ENCODE measurements at regions of chr19 and their contacts with region 1.

Region 1: GRCh38 chr19:12789904-12790619 is 1.2 kb upstream of the JUNB start:
- DNase-seq: peak; percentile 75 to 97 (median 86)
- ATAC-seq: peak; percentile 25
- H3K4me3 ChIP-seq: peak overlapping the region; percentile 98
- H3K4me3 Mint-ChIP-seq: peak overlapping the region; percentile 97
- H3K27ac ChIP-seq: peak overlapping the region; percentile 99 to 100
- H3K27ac Mint-ChIP-seq: peak overlapping the region; percentile 99
- H3K4me1 ChIP-seq: peaks cover 66% of the 10 kb centered on the region
- H3K4me1 Mint-ChIP-seq: peaks cover 42% of the 10 kb centered on the region
- H3K27me3 ChIP-seq: no peaks in the 10 kb centered on the region
- H3K27me3 Mint-ChIP-seq: peaks cover 13% of the 10 kb centered on the region
- CTCF ChIP-seq: no peak

Region 2: GRCh38 chr19:12722566-12723380 is 67.3 kb before region 1 on chr19:
- CTCF ChIA-PET with region 1: no interaction called
- POLR2A ChIA-PET with region 1: interaction called, 39 read pairs
- intact Hi-C with region 1: no loop called
- DNase-seq: peak; percentile 80 to 99 (median 90)
- ATAC-seq: peak; percentile 87
- H3K4me3 ChIP-seq: peak overlapping the region; percentile 69
- H3K4me3 Mint-ChIP-seq: peak overlapping the region; percentile 98
- H3K27ac ChIP-seq: peak overlapping the region; percentile 48 to 78
- H3K27ac Mint-ChIP-seq: peak overlapping the region; percentile 89
- H3K4me1 ChIP-seq: peaks cover 39% of the 10 kb centered on the region
- H3K4me1 Mint-ChIP-seq: peaks cover 47% of the 10 kb centered on the region
- H3K27me3 ChIP-seq: no peaks in the 10 kb centered on the region
- H3K27me3 Mint-ChIP-seq: no peaks in the 10 kb centered on the region
- CTCF ChIP-seq: no peak

Region 3: GRCh38 chr19:12766051-12766521 is 24.0 kb before region 1 on chr19:
- CTCF ChIA-PET with region 1: interaction called, 30 read pairs
- POLR2A ChIA-PET with region 1: interaction called, 23 read pairs
- intact Hi-C with region 1: no loop called
- DNase-seq: peak in 10 of 14 experiments; percentile 66 to 91 (median 80)
- ATAC-seq: peak; percentile 77
- H3K4me3 ChIP-seq: no peak overlapping the region
- H3K4me3 Mint-ChIP-seq: no peak overlapping the region
- H3K27ac ChIP-seq: no peak overlapping the region
- H3K27ac Mint-ChIP-seq: no peak overlapping the region
- H3K4me1 ChIP-seq: peaks cover 22% of the 10 kb centered on the region
- H3K4me1 Mint-ChIP-seq: peaks cover 7% of the 10 kb centered on the region
- H3K27me3 ChIP-seq: no peaks in the 10 kb centered on the region
- H3K27me3 Mint-ChIP-seq: no peaks in the 10 kb centered on the region
- CTCF ChIP-seq: peak; percentile 90

Region 4: DNA sequence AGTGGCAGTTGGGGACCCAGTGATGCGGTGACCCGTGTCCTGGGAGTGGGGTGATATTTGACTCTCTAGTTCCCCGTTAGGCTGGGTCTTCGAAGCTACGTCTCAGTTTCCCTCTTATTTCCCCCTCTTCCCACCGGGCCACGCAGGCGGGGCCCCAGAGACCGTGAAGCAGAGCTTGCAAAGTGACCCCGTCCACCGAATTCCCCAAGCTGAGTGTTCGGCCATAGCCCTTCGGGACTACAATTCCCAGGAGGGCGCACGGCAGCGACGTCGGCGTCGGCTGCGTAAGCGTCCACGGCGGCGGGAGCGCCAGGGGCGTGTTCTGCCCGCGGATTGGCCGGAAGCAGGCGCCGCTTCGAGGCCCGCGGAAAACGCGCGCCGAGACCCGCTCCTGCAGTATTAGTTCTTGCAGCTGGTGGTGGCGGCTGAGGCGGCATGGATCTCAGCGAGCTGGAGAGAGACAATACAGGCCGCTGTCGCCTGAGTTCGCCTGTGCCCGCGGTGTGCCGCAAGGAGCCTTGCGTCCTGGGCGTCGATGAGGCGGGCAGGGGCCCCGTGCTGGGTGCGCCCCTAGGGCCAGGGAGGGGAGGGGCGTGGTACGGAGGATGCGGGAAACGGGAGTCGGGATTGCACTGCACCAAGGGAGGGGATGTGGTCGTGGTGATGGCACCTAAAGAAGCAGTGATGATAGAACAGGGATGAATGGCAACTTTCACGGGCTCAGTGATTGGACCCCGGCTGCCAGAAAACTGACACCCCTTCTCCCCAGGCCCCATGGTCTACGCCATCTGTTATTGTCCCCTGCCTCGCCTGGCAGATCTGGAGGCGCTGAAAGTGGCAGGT is 16.4 kb after region 1 on chr19 and contains the start of gene RNASEH2A:
- CTCF ChIA-PET with region 1: interaction called, 11 read pairs
- POLR2A ChIA-PET with region 1: interaction called, 40 read pairs
- intact Hi-C with region 1: no loop called
- DNase-seq: peak; percentile 73 to 94 (median 84)
- ATAC-seq: peak; percentile 91
- H3K4me3 ChIP-seq: peak within 1 kb of the TSS; percentile 64
- H3K4me3 Mint-ChIP-seq: peak within 1 kb of the TSS; percentile 96
- H3K27ac ChIP-seq: peak within 1 kb of the TSS in 1 of 2 donors; percentile 23
- H3K27ac Mint-ChIP-seq: peak within 1 kb of the TSS; percentile 88
- H3K4me1 ChIP-seq: peaks cover 26% of the 10 kb centered on the region
- H3K4me1 Mint-ChIP-seq: peaks cover 21% of the 10 kb centered on the region
- H3K27me3 ChIP-seq: no peaks in the 10 kb centered on the region
- H3K27me3 Mint-ChIP-seq: no peaks in the 10 kb centered on the region
- CTCF ChIP-seq: no peak
- total RNA-seq, gene RNASEH2A: 1.5 to 2.7 TPM

Region 5: DNA sequence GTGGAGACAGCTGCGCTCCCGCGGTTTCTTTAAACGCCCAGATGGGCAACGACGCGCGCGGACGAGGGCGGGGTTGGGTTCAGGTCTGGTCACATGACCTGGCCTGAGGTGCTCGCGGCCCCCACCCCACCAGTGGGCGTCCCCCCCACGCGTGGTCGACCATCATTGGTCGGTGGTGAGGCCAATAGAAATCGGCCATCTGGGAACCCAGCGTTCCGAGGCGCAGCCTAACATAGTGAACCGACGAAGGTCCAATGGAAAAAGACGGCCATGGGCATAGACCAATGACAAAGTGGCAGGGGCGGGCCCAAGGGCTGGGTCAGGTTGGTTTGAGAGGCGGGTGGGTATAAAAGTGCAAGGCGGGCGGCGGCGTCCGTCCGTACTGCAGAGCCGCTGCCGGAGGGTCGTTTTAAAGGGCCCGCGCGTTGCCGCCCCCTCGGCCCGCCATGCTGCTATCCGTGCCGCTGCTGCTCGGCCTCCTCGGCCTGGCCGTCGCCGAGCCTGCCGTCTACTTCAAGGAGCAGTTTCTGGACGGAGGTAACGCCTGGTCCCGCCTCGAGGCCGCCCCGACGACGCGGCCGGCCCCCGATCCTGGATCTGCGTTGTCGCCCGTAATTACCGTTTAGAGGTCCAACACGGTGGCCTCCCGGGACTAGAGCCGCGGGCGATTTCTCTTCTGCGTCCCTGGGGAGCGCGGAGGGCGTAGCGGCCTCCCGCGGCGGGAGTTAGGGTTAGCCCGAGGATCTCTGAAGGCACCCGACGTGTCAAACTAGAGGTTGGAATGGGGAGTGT is 148.4 kb after region 1 on chr19 and contains the start of gene CALR:
- CTCF ChIA-PET with region 1: no interaction called
- POLR2A ChIA-PET with region 1: interaction called, 3 read pairs
- intact Hi-C with region 1: loop called in 1 of 2 experiments (anchors 10 kb)
- DNase-seq: peak; percentile 97 to 100 (median 99)
- ATAC-seq: peak; percentile 88
- H3K4me3 ChIP-seq: peak within 1 kb of the TSS; percentile 94
- H3K4me3 Mint-ChIP-seq: peak within 1 kb of the TSS; percentile 94
- H3K27ac ChIP-seq: peak within 1 kb of the TSS; percentile 74 to 80
- H3K27ac Mint-ChIP-seq: peak within 1 kb of the TSS; percentile 93
- H3K4me1 ChIP-seq: peaks cover 65% of the 10 kb centered on the region
- H3K4me1 Mint-ChIP-seq: peaks cover 54% of the 10 kb centered on the region
- H3K27me3 ChIP-seq: peaks cover 0 to under 1% of the 10 kb centered on the region in 2 experiments
- H3K27me3 Mint-ChIP-seq: no peaks in the 10 kb centered on the region
- CTCF ChIP-seq: no peak
- total RNA-seq, gene CALR: 558 to 559 TPM

Region 6: GRCh38 chr19:12965017-12965811 is 175.2 kb after region 1 on chr19:
- CTCF ChIA-PET with region 1: no interaction called
- POLR2A ChIA-PET with region 1: no interaction called
- intact Hi-C with region 1: no loop called
- DNase-seq: peak; percentile 64 to 89 (median 78)
- ATAC-seq: peak; percentile 95
- H3K4me3 ChIP-seq: peak overlapping the region; percentile 59
- H3K4me3 Mint-ChIP-seq: peak overlapping the region; percentile 82
- H3K27ac ChIP-seq: no peak overlapping the region
- H3K27ac Mint-ChIP-seq: no peak overlapping the region
- H3K4me1 ChIP-seq: peaks cover 13% of the 10 kb centered on the region
- H3K4me1 Mint-ChIP-seq: peaks cover 9% of the 10 kb centered on the region
- H3K27me3 ChIP-seq: no peaks in the 10 kb centered on the region
- H3K27me3 Mint-ChIP-seq: no peaks in the 10 kb centered on the region
- CTCF ChIP-seq: peak; percentile 99